HepG2 (cell line): ENCODE measurements at regions of chr3 and their contacts with region 1.

Region 1: DNA sequence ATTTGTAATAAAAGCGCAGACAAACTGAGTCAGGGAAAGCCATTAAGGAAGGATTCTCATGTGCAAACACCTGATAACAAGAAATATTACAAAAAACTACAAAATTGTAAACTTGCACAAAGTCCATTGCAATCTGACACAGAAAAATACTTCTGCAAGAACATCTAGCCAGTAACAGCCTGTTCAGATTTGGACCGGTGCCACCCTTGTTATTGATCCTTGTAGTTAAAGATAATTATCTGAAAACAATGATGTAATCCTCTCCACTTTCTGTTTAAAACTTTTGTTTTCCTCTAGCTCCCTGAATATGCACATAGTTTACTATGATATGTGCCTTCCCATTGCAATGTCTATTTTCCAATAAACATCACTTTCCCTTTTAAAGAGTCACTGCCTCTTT is 1090.2 kb downstream of the PLOD2 start:
- DNase-seq: no peak
- ATAC-seq: no peak
- H3K4me3 ChIP-seq: no peak overlapping the region
- H3K27ac ChIP-seq: no peak overlapping the region
- H3K4me1 ChIP-seq: no peaks in the 10 kb centered on the region
- H3K27me3 ChIP-seq: no peaks in the 10 kb centered on the region
- CTCF ChIP-seq: no peak
- EP300 ChIP-seq: no peak
- POLR2A ChIP-seq: no peak
- RAD21 ChIP-seq: no peak

Region 2: GRCh38 chr3:144831955-144832716 is 238.7 kb before region 1 on chr3:
- CTCF ChIA-PET with region 1: no interaction called
- POLR2A ChIA-PET with region 1: no interaction called
- in situ Hi-C with region 1: no loop called
- intact Hi-C with region 1: no loop called
- DNase-seq: no peak
- ATAC-seq: no peak
- H3K4me3 ChIP-seq: no peak overlapping the region
- H3K27ac ChIP-seq: no peak overlapping the region
- H3K4me1 ChIP-seq: no peaks in the 10 kb centered on the region
- H3K27me3 ChIP-seq: no peaks in the 10 kb centered on the region
- CTCF ChIP-seq: no peak
- EP300 ChIP-seq: no peak
- POLR2A ChIP-seq: no peak
- RAD21 ChIP-seq: no peak

Region 3: DNA sequence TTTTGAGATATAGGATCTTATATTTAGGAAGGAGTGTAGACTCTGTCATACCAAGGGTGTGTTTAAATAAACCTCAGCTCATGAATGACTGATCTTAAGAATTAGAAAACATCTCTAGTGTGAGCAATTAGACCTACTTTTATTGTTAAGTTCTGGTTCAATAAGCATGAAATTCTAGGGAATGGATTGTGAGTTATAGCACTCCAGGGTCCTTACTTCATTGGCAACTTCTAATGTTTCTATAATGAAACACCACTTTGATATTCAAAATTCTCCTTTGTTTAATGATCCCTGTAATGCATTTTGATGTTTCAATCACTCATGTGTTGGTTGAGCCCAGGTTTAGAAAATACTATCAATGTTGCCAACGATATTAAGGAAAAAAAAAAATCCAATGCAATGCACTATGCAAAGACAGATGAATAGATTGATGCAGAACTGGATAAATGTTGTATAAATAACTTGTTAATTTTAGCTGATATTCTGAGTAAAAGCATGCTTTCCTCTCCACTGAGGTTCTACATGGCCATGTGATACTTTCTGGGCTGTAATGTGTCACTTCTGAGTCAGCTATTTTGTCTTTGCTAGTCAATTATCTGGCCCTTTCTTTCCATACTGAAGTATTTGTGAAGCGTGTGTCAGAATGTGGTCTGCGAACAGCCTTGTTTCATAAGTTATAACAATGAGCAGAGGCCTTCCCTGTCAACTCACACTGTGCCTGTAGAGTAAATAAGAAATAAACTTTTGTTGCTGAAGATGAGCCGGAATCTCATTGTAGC is 54.3 kb after region 1 on chr3:
- CTCF ChIA-PET with region 1: no interaction called
- POLR2A ChIA-PET with region 1: no interaction called
- in situ Hi-C with region 1: no loop called
- intact Hi-C with region 1: no loop called
- DNase-seq: no peak
- ATAC-seq: no peak
- H3K4me3 ChIP-seq: no peak overlapping the region
- H3K27ac ChIP-seq: no peak overlapping the region
- H3K4me1 ChIP-seq: no peaks in the 10 kb centered on the region
- H3K27me3 ChIP-seq: no peaks in the 10 kb centered on the region
- CTCF ChIP-seq: no peak
- EP300 ChIP-seq: no peak
- POLR2A ChIP-seq: no peak
- RAD21 ChIP-seq: no peak

Region 4: DNA sequence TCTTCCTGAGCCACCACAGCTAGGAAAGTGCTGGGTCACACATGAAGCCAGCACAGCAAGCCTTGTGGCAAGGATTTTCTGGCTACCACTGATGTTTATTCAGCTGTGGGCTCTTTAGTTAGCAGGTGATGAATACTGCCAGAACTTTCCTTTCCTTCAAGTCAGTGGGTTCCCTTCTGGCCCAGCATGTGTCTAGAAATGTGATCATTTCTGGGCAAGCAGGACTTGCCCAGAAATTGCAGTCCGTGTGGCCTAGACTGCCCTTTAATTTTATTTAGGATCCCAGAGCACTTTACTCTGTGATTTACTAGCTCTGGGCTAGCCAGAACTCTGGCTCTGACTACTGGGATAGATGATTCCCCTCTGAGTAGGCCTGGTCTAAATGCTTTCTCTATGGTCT is 1938.1 kb after region 1 on chr3:
- CTCF ChIA-PET with region 1: no interaction called
- POLR2A ChIA-PET with region 1: no interaction called
- in situ Hi-C with region 1: no loop called
- intact Hi-C with region 1: loop called (anchors 5 kb)
- DNase-seq: no peak
- ATAC-seq: no peak
- H3K4me3 ChIP-seq: no peak overlapping the region
- H3K27ac ChIP-seq: no peak overlapping the region
- H3K4me1 ChIP-seq: no peaks in the 10 kb centered on the region
- H3K27me3 ChIP-seq: no peaks in the 10 kb centered on the region
- CTCF ChIP-seq: no peak
- EP300 ChIP-seq: no peak
- POLR2A ChIP-seq: no peak
- RAD21 ChIP-seq: no peak